Calu3 (cell line): ENCODE measurements at regions of chr10 and their contacts with region 1.

Region 1: DNA sequence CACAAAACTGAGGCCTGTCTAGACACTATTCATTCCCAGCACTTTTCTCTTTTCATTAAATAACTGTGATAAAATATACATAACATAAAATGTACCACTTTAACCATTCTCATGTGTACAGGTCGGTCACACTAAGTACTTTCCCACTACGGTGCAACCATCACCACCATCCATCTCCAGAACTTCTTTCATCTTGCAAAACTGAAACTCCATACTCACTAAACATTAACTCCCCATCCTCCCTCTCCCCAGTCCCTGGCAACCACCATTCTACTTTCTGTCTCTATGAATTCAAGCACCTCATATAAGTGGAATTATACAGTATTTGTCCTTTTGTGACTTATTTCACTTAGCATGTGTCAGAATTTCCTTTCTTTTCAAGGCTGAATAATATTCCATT is 53.0 kb downstream of the ARHGAP12 start:
- DNase-seq: no peak
- H3K4me3 Mint-ChIP-seq: no peak overlapping the region
- H3K27ac Mint-ChIP-seq: no peak overlapping the region
- H3K4me1 Mint-ChIP-seq: peaks cover 49% of the 10 kb centered on the region
- H3K27me3 Mint-ChIP-seq: no peaks in the 10 kb centered on the region
- CTCF ChIP-seq: no peak

Region 2: DNA sequence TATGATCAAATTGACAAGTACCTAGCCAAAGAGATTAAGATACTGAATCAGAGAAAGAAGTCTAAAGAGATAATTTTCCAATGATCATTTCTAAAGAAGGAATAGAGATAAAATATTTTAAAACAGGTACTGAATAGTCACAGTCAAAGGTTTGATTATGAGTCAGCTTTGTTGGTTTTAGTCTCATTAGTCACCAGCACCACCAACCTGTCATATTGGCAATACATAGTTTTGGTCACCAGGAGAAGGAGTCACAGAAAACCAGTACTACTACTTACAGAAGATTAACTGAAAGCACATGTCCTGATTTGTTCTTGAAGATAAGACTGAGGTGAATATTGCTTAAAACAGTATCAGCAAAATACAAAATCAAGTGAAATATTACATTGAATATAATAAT is 522.0 kb before region 1 on chr10:
- CTCF ChIA-PET with region 1: no interaction called
- intact Hi-C with region 1: no loop called
- DNase-seq: peak; percentile 49
- H3K4me3 Mint-ChIP-seq: no peak overlapping the region
- H3K27ac Mint-ChIP-seq: peak overlapping the region; percentile 47
- H3K4me1 Mint-ChIP-seq: peaks cover 38% of the 10 kb centered on the region
- H3K27me3 Mint-ChIP-seq: no peaks in the 10 kb centered on the region
- CTCF ChIP-seq: no peak

Region 3: DNA sequence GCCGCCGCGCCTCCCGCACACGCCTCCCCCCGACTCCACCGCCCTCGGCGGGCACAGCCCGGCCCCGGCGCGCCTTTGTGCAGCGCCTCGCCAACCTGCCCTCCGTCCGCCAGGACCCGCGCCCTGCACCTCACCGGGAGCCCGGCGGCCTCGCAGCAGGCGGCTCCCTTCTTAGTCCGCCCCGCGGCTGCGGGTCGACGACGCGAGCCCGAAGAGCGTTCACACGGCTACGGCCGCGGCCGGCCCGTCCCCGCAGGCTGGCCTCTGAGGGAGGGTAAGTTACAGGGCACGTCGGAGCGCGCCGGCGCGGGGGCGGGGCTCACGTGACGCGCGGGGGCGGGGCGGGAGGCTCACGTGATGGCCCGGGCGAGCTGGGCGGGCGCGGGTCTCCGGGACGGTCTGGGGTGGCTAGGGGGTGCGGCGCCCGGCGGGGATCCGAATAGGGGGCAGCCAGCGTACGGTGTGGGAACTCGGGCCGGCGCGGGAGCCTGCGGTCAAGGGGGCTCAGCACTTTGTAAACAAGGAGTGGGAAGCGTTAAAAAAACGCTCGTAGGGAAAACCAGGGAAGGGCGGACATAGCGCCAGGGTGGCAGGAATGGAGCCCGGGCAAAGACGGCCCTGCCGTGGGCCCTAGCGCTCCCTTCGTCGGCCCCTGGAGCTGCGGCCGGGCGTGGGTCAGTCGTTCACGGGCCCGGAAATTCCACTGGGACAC is 53.1 kb after region 1 on chr10 and contains the start of gene ARHGAP12:
- CTCF ChIA-PET with region 1: no interaction called
- intact Hi-C with region 1: loop called (anchors 2 kb)
- DNase-seq: peak; percentile 95
- H3K4me3 Mint-ChIP-seq: peak within 1 kb of the TSS; percentile 89
- H3K27ac Mint-ChIP-seq: peak within 1 kb of the TSS; percentile 90
- H3K4me1 Mint-ChIP-seq: peaks cover 43% of the 10 kb centered on the region
- H3K27me3 Mint-ChIP-seq: no peaks in the 10 kb centered on the region
- CTCF ChIP-seq: no peak
- total RNA-seq, gene ARHGAP12: 56.0 and 60.7 TPM in 2 replicates

Region 4: GRCh38 chr10:32023264-32023663 is 147.7 kb after region 1 on chr10:
- CTCF ChIA-PET with region 1: interaction called, 11 read pairs
- intact Hi-C with region 1: no loop called
- DNase-seq: no peak
- H3K4me3 Mint-ChIP-seq: no peak overlapping the region
- H3K27ac Mint-ChIP-seq: no peak overlapping the region
- H3K4me1 Mint-ChIP-seq: no peaks in the 10 kb centered on the region
- H3K27me3 Mint-ChIP-seq: no peaks in the 10 kb centered on the region
- CTCF ChIP-seq: no peak